Posterior cingulate gyrus (tissue), 11 donors: ENCODE measurements at regions of chr1 and their contacts with region 1.

Region 1: DNA sequence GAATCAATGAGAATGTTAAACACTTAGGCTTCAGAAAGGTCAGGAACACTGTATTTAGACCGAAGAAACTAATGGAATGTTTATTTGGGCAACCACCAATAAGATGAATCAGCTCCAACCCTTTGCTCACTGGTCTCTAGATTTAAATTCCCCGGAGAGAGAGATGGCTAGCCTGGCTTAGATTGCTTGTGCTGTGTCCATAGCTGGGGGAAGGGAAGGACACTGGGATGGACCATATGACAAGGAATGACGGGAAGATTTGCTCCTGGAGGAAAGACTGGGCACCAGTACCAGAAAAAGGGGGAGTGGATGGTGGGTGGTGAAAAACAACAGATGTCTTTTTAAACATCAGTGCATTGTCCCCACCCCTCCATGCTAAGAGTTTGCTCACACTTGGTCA is 426.6 kb downstream of the DUSP10 start:
- DNase-seq: no peak

Region 2: GRCh38 chr1:221284028-221284427 is 31.3 kb before region 1 on chr1:
- intact Hi-C with region 1: loop called (anchors 5 kb)
- DNase-seq: no peak